ENCODE measurements at regions of chr1 and their contacts with region 1.

Region 1: DNA sequence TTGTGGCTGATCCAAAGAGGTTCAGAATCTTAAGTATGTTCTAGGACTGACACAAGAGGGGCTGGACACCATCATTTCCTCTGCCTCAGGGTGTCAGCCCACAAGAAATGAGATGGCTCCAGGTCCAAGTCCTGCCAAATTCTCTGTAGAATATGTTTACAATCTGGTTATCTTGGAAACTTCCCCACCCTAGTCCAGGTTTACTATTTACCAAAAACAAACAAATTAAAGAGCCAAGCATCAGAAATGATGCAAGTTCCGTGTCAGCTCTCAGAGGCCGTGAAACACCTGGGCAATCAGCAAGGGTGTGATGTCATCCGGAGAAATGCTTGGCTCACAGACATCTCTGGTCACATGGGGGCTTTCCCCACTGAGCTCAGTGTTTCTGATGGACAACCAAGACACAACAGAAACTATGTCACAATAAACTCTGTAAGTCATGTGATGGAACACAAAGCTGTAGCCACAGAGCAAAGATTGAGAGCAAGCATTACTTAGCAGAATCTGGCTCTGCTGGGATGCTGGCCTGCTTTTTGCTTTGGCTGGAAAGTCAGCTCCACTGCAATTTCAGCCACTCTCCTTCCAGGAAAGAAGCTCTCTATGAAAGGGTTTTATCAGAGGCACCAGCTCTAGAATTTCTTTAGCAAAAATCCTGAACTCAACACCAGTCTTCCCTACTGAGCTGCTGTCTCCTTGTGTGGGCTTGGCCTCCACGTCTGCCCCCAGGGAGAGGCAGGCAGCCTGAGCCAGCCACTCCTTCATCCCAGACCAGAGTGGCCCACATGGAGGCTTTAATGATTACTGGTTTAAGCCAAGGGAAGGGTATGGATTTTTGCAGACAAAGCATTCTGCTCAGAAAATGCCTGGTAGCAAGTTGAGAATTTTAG is 55.9 kb downstream of the NENF start:
- DNase-seq: peak; percentile 54 to 98
- ATAC-seq: peak; percentile 39 to 62
- H3K4me3 ChIP-seq: no peak overlapping the region
- H3K27ac ChIP-seq: peak overlapping the region; percentile 75 to 86
- H3K4me1 ChIP-seq: peaks cover 67% of the 10 kb centered on the region
- CTCF ChIP-seq: no peak
- EP300 ChIP-seq: peak; percentile 94; a peak in 4 of 5 replicates
- POLR2A ChIP-seq: no peak
- RAD21 ChIP-seq: peak in 1 of 2 experiments; percentile 1; a peak in 1 of 5 replicates

Region 2: GRCh38 chr1:212414328-212415106 is 74.1 kb before region 1 on chr1 and contains the start of gene PACC1:
- CTCF ChIA-PET with region 1: no interaction called
- POLR2A ChIA-PET with region 1: no interaction called
- DNase-seq: peak; percentile 88 to 99
- ATAC-seq: peak; percentile 89 to 97
- H3K4me3 ChIP-seq: peak within 1 kb of the TSS; percentile 80
- H3K27ac ChIP-seq: peak within 1 kb of the TSS; percentile 75 to 89
- H3K4me1 ChIP-seq: peaks cover 14% of the 10 kb centered on the region
- CTCF ChIP-seq: no peak
- EP300 ChIP-seq: no peak
- POLR2A ChIP-seq: peak; percentile 93
- RAD21 ChIP-seq: no peak
- polyA plus RNA-seq, gene PACC1: 19.6 and 24.5 TPM in 2 replicates

Region 3: GRCh38 chr1:212520746-212521145 is 32.1 kb after region 1 on chr1:
- CTCF ChIA-PET with region 1: no interaction called
- POLR2A ChIA-PET with region 1: no interaction called
- DNase-seq: no peak
- ATAC-seq: no peak
- H3K4me3 ChIP-seq: no peak overlapping the region
- H3K27ac ChIP-seq: no peak overlapping the region
- H3K4me1 ChIP-seq: peaks cover 12% of the 10 kb centered on the region
- CTCF ChIP-seq: no peak
- EP300 ChIP-seq: no peak
- POLR2A ChIP-seq: no peak
- RAD21 ChIP-seq: no peak

Region 4: DNA sequence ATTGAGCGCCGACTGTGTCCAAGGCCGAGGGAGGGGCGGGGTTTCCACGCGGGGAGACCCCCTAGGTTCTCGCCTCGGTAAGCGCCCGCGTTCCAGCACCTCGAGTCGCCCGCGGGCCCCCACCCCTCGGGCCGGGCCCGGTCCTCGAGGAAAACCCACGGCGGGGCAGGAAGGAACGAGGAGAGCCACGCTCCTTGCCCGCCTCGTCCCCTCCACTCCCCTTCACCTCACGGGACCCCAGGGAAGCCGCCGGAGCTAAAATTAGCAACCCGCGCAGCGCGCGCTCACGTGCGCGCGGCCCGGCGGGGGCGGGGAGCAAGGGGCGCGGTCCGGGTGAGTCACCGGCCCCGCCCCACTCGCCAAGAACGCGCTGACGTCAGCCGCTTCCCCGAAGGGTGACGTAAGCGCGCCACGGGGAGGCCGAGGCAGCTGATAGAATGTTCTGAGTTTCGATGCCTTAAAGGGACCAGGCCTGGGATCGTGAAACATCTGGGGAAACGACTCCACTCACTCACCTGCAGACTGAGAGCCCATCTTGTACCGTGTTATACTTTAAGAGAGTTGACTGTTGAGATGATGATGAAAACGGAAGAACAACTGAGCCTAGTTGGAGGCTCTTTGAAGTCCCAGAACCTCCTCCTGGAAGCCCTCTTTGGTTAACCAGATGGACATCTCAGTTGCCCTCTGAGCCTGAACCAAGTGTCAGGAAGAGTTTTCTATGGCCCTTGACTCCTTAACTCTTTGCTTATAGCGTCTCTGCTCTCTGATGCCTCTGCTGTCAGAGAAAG is 70.2 kb after region 1 on chr1:
- CTCF ChIA-PET with region 1: interaction called, 4 read pairs
- POLR2A ChIA-PET with region 1: interaction called, 17 read pairs
- DNase-seq: peak; percentile 82 to 95
- ATAC-seq: peak; percentile 91 to 92
- H3K4me3 ChIP-seq: peak overlapping the region; percentile 69
- H3K27ac ChIP-seq: peak overlapping the region; percentile 89 to 95
- H3K4me1 ChIP-seq: peaks cover 16% of the 10 kb centered on the region
- CTCF ChIP-seq: no peak
- EP300 ChIP-seq: no peak; a peak in 1 of 5 replicates
- POLR2A ChIP-seq: no peak; the same call in 1 of the 2 replicates
- RAD21 ChIP-seq: peak in 1 of 2 experiments; percentile 20; a peak in 1 of 5 replicates

Measured in A549 (cell line).